GM12878 (cell line): ENCODE measurements at regions of chr12 and their contacts with region 1.

Region 1: GRCh38 chr12:12582895-12583303 is 20.2 kb upstream of the DUSP16 start:
- DNase-seq: peak; percentile 100
- ATAC-seq: peak; percentile 92
- H3K4me3 ChIP-seq: no peak overlapping the region
- H3K27ac ChIP-seq: peak overlapping the region; percentile 94
- H3K4me1 ChIP-seq: peaks cover 44% of the 10 kb centered on the region
- H3K27me3 ChIP-seq: no peaks in the 10 kb centered on the region
- CTCF ChIP-seq: no peak
- EP300 ChIP-seq: peak; percentile 96 to 99
- POLR2A ChIP-seq: peak; percentile 36; the same call in 1 of the 2 replicates
- RAD21 ChIP-seq: 0 out of 2 replicates have a peak, but pooled peaks have one; percentile 17

Region 2: DNA sequence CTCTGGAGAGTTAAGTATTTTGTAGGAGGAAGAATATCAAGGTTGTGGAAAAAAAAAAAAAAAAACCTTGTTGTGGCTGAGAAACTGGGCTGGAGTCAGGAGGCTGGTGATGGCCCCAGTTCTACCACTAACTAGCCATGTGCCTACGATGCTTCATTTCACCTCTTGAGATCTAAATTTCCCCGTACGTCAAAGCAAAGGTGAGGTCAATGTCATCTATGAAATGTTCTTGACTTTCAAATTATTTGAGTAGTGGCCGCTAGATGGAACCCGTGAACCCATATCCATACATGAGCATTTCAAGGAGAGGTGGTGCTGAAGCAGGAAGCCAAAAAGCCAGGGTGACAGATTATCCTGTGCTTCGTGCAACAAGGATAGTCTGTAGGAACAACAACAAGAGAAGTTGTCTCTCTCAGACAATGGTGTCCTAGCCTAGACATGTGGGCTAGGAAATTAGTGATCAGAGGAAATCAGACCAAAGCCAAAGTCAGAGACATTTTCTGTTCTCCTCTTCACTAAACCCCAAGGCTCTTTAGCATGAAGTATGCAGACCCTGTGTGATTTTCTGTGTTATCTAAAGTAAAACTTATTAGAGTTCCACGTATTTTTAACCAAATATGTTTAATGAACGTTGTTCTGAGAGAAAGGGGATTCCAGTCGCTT is 1028.9 kb before region 1 on chr12:
- CTCF ChIA-PET with region 1: no interaction called
- POLR2A ChIA-PET with region 1: no interaction called
- RAD21 ChIA-PET with region 1: no interaction called
- SMC1A ChIA-PET with region 1: interaction called, 3 read pairs
- in situ Hi-C with region 1: loop called (anchors 25 kb)
- intact Hi-C with region 1: no loop called
- DNase-seq: peak; percentile 88
- ATAC-seq: peak; percentile 87
- H3K4me3 ChIP-seq: no peak overlapping the region
- H3K27ac ChIP-seq: peak overlapping the region; percentile 70
- H3K4me1 ChIP-seq: peaks cover 4% of the 10 kb centered on the region; the same call in 1 of the 2 replicates
- H3K27me3 ChIP-seq: no peaks in the 10 kb centered on the region
- CTCF ChIP-seq: peak; percentile 61 to 77 (median 63)
- EP300 ChIP-seq: peak; percentile 45 to 58; a peak in 2 of 4 replicates
- POLR2A ChIP-seq: no peak
- RAD21 ChIP-seq: peak; percentile 88

Region 3: GRCh38 chr12:12555656-12556055 is 27.2 kb before region 1 on chr12:
- CTCF ChIA-PET with region 1: no interaction called
- POLR2A ChIA-PET with region 1: interaction called, 6 read pairs
- RAD21 ChIA-PET with region 1: interaction called, 18 read pairs
- SMC1A ChIA-PET with region 1: interaction called, 7 read pairs
- in situ Hi-C with region 1: no loop called
- intact Hi-C with region 1: no loop called
- DNase-seq: no peak
- ATAC-seq: no peak
- H3K4me3 ChIP-seq: no peak overlapping the region
- H3K27ac ChIP-seq: no peak overlapping the region
- H3K4me1 ChIP-seq: peaks cover 16% of the 10 kb centered on the region
- H3K27me3 ChIP-seq: no peaks in the 10 kb centered on the region
- CTCF ChIP-seq: no peak
- EP300 ChIP-seq: no peak
- POLR2A ChIP-seq: no peak
- RAD21 ChIP-seq: no peak

Region 4: DNA sequence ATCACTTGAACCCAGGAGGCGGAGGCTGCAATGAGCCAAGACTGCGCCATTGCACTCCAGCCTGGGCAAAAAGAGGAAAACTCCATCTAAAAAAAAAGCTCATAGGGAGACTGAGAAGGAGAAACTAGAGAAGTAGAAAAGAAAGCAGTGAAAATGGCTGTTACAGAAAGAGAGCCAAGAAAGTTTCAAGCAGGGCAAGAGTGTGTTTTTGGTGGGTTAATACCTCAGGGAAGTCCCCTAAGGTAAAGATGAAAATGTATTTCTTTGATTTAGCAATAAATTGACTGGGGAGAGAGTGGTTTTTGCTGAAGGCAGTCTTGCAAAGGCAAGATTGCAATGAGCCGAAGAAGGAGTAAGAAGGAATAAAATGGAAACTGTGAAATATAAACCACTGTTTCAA is 10.2 kb before region 1 on chr12:
- CTCF ChIA-PET with region 1: interaction called, 7 read pairs
- POLR2A ChIA-PET with region 1: interaction called, 9 read pairs
- RAD21 ChIA-PET with region 1: interaction called, 5 read pairs
- SMC1A ChIA-PET with region 1: interaction called, 17 read pairs
- in situ Hi-C with region 1: no loop called
- intact Hi-C with region 1: no loop called
- DNase-seq: no peak
- ATAC-seq: peak; percentile 61
- H3K4me3 ChIP-seq: peak overlapping the region; percentile 32; the same call in 1 of the 2 replicates
- H3K27ac ChIP-seq: peak overlapping the region; percentile 81
- H3K4me1 ChIP-seq: no peaks in the 10 kb centered on the region; the same call in none of the 2 replicates
- H3K27me3 ChIP-seq: no peaks in the 10 kb centered on the region
- CTCF ChIP-seq: no peak
- EP300 ChIP-seq: no peak
- POLR2A ChIP-seq: no peak
- RAD21 ChIP-seq: no peak

Region 5: GRCh38 chr12:12654691-12655460 is 72.0 kb after region 1 on chr12:
- CTCF ChIA-PET with region 1: interaction called, 3 read pairs
- POLR2A ChIA-PET with region 1: no interaction called
- RAD21 ChIA-PET with region 1: no interaction called
- SMC1A ChIA-PET with region 1: interaction called, 15 read pairs
- in situ Hi-C with region 1: no loop called
- intact Hi-C with region 1: no loop called
- DNase-seq: no peak
- ATAC-seq: 0 out of 3 replicates have a peak, but pooled peaks have one; percentile 8
- H3K4me3 ChIP-seq: no peak overlapping the region
- H3K27ac ChIP-seq: no peak overlapping the region
- H3K4me1 ChIP-seq: no peaks in the 10 kb centered on the region; the same call in 1 of the 2 replicates
- H3K27me3 ChIP-seq: no peaks in the 10 kb centered on the region
- CTCF ChIP-seq: no peak
- EP300 ChIP-seq: no peak
- POLR2A ChIP-seq: no peak
- RAD21 ChIP-seq: no peak

Region 6: DNA sequence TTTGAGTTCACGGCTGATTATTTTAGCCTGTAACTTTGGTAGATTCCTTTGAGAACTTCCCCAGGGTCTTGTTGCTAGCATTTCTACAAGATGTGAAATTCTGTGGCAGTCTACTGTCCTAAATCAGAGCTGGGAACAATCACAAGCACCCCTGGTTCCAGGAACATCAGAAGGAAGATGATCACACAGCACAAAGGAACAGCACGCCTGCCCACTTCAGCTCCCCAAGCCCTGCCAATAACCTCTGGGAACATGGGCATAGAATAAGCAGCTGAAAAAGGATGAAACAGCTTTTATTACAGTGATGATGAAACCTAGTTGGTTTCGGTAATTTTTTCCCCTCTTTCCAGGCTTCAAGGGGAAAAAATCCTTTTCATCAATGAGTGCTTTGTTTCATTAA is 100.8 kb after region 1 on chr12:
- CTCF ChIA-PET with region 1: no interaction called
- POLR2A ChIA-PET with region 1: no interaction called
- RAD21 ChIA-PET with region 1: no interaction called
- SMC1A ChIA-PET with region 1: no interaction called
- in situ Hi-C with region 1: no loop called
- intact Hi-C with region 1: no loop called
- DNase-seq: no peak
- ATAC-seq: no peak
- H3K4me3 ChIP-seq: no peak overlapping the region
- H3K27ac ChIP-seq: no peak overlapping the region
- H3K4me1 ChIP-seq: no peaks in the 10 kb centered on the region
- H3K27me3 ChIP-seq: no peaks in the 10 kb centered on the region
- CTCF ChIP-seq: no peak
- EP300 ChIP-seq: no peak
- POLR2A ChIP-seq: no peak
- RAD21 ChIP-seq: no peak